Aorta (tissue), 5 donors: ENCODE measurements at regions of chr22 and their contacts with region 1.

Region 1: DNA sequence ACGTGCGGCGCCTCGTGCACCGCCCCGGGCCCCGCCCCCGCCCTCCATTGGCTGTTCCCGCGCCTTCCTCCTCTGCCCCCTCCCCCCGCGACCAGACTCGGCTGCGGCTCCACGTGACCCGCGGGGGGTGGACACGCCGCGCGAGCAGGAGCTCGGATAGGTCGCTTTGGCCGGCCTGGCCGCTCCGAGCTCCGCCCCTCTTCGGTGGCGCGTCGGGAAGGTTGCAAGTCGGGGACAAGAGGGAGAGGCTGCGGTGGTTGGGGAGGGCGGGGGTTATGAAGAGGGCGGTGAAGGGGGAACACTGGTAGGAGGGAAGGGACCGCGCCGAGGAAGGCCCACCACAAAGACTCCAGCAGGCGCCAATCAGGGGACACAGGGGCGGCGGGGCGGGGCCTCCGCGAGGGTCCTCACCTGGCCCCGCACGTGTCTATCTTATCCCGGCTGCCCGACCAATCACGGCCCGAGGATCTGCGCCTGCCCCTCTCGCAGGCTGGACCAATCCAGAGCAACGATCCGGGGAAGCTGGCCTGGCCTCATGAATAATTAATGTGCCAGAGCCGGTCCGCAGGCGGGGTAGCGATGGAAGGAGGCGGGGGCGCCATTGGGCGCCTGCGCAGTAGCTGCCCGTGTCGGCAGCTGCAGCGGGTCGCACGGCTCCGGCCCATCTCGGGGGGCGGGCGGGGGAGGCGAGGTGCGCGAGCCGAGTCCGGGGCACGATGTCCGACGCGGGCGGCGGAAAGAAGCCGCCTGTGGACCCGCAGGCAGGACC is at the start of gene TEF:
- DNase-seq: peak; percentile 99
- ATAC-seq: peak; percentile 95
- H3K4me3 ChIP-seq: peak within 1 kb of the TSS; percentile 80 to 83
- H3K27ac ChIP-seq: peak within 1 kb of the TSS; percentile 66 to 98
- H3K4me1 ChIP-seq: no peaks in the 10 kb centered on the region
- H3K27me3 ChIP-seq: no peaks in the 10 kb centered on the region
- total RNA-seq, gene TEF: 8.6 to 23.3 TPM

Region 2: DNA sequence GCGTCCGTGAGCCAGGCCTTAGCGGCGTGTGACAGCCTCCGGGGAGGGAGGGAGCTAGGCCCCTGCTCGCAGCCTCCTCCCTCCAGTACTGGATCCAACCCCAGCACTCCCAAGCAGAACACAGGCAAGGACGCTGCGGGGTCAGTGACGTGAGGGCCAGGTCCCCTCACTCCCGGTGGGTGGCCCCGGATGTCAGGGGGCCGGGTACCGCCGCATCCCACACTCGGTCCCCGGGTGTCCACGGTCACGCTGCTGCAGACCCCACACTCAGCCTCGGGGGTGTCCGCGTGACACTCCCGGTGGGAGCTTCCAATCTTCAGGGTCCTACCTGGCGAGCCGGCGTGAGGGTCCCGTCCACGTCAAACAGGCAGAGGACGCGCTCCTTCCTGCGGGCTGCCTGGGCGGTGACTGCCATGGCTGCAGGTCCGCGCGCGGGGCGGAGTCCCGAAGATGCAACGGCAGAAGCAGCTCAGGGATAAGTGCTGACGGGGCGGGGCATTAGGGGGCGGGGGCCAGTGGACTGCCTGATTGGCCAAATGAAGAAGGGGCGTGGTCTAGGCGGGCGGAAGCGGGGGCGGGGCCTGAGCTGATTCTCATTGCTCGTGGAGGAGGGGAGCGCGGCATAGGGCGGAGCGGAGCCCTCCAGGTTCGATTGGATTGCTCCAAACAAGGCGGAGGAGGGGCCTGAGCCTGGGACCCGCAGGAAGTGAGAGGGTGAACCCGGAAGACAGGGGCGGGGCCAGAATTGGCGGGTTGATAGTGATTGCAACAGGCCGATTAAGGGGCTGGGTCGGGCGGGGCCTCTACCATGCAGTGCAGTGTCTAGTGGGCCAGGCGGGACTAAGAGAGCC is 208.1 kb after region 1 on chr22 and contains the start of gene PMM1:
- intact Hi-C with region 1: loop called in 1 of 2 experiments (anchors 10 kb)
- DNase-seq: peak; percentile 100
- ATAC-seq: peak; percentile 100
- H3K4me3 ChIP-seq: peak within 1 kb of the TSS; percentile 48 to 67
- H3K27ac ChIP-seq: peak within 1 kb of the TSS in 1 of 2 donors; percentile 18
- H3K4me1 ChIP-seq: no peaks in the 10 kb centered on the region
- H3K27me3 ChIP-seq: no peaks in the 10 kb centered on the region
- total RNA-seq, gene PMM1: 23.8 to 25.2 TPM